ENCODE measurements at regions of chr1 and their contacts with region 1.

Region 1: DNA sequence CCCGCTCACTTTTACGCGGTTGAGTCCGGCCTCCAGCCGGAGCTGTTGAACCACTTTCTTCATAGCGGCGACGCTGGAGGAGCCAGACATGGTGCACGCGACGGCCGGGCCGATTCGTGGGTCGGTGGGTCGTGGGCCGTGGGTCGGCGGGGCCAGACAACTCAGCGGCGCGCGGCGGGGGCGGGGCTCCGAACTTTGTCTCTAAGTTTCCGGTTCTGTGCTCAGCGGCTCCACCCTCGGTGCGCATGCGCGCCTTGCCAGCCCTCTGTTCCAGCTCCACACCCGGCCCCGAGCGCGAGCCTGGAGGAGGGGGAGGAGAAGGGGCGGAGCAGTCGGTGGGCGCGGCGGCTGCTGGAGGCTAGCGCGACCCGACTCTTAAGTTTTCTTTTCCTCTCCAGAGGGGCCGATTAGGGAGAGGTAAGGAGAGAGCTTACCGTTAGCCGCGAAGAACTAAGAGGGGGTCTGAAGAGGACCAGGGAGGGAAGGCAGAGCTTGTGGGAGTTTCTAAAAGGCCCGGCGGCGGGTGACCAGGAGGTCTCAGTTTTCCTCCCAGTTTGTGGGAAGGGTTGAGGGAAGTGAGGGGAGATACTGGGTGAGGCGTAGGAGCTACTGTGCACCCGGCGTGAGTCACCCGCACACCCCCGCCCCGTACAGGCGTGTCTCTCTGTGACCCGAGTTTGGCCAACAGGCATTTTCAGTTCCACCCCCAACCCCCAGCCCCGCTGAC is at the starts of genes GNG5 and SPATA1:
- DNase-seq: peak; percentile 99
- ATAC-seq: peak; percentile 92
- H3K4me3 Mint-ChIP-seq: peak within 1 kb of the TSS; percentile 96
- H3K27ac Mint-ChIP-seq: peak within 1 kb of the TSS; percentile 98
- H3K4me1 Mint-ChIP-seq: peaks cover 37% of the 10 kb centered on the region
- H3K27me3 Mint-ChIP-seq: no peaks in the 10 kb centered on the region
- total RNA-seq, gene GNG5: 103 to 114 TPM
- total RNA-seq, gene SPATA1: 2.1 to 6.1 TPM

Region 2: DNA sequence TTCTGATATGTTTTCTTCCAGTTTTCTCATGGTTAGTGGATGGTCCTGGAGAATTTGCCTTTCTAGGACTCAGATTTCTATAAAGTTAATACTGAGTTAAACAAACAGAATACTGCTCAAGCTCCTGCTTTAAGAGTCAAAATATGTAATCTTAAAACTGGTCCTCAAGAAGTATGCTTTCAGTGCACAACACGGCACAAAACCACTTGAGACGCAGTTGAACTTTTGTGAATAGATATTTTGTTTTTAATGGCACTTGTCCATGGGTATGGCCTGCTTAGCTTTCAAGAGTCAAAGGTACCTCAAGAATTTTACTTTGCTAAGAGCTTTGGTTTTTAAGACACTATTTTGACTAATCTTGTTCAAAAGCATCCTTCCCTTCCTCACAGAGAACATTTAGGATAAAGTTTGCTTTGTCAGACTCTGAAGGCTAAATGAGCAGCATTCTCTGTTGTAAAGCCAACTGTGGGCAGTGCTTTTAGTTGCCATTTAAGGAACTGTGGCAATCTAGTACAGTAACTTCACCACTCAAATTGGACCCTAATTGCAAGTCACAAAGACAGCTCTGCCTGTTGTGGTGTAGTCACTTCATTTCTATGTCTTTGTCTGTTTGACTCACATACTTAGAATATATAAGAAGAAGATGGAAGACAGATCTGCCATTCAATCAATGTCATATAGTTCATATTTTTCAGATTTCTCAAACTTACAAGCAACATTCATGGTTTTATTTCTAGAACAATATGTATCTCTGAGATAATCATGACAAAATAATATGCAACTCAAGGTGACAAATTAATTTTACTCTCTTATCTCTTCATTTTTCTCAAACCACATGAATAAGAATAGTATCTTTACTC is 175.8 kb before region 1 on chr1:
- CTCF ChIA-PET with region 1: no interaction called
- DNase-seq: no peak
- ATAC-seq: no peak
- H3K4me3 Mint-ChIP-seq: no peak overlapping the region
- H3K27ac Mint-ChIP-seq: no peak overlapping the region
- H3K4me1 Mint-ChIP-seq: no peaks in the 10 kb centered on the region
- H3K27me3 Mint-ChIP-seq: no peaks in the 10 kb centered on the region

Region 3: GRCh38 chr1:84467298-84467697 is 38.9 kb before region 1 on chr1:
- CTCF ChIA-PET with region 1: no interaction called
- DNase-seq: no peak
- ATAC-seq: no peak
- H3K4me3 Mint-ChIP-seq: no peak overlapping the region
- H3K27ac Mint-ChIP-seq: no peak overlapping the region
- H3K4me1 Mint-ChIP-seq: no peaks in the 10 kb centered on the region
- H3K27me3 Mint-ChIP-seq: peaks cover 32% of the 10 kb centered on the region

Region 4: DNA sequence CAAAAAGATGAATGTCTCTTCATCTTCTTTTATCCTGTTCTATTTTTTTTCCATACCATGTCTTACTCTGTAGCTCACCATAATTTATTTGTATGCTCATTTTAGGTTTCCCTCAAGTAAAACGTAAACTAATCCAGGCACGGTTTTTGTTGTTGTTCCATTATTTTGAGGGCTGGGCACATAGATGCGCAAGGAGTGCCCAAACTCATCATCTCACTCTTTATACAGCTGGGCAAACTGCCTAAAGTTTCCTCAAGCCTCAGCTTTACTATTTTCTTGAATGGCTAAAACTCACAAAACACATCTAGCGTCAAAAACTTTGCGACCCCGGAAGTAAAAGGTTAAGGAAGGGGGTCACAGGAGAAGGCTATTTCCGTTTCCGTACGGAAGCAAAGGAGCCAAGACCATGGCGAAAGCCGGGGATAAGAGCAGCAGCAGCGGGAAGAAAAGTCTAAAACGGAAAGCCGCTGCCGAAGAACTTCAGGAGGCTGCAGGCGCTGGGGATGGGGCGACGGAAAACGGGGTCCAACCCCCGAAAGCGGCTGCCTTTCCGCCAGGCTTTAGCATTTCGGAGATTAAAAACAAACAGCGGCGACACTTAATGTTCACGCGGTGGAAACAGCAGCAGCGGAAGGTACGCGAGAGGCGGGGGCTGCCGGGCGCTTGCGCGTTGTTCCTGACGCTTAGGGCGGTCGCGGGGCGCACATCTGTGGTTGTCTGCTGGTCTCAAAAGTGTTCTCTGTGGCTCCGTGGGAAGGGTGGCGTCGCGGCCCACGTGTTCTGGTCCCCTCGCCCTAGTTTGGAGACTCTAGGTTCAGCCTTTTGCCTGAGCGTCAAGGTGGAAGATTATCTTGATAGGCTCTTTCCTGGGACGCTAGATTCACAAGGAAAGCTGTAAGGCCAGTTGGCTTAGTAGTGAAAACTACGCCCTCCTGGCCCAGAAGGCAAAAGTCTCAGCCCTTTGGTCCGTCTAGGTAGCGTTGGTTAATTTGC is 27.0 kb before region 1 on chr1 and contains the start of gene RPF1:
- CTCF ChIA-PET with region 1: interaction called, 12 read pairs
- DNase-seq: peak; percentile 85
- ATAC-seq: peak; percentile 96
- H3K4me3 Mint-ChIP-seq: peak within 1 kb of the TSS; percentile 92
- H3K27ac Mint-ChIP-seq: peak within 1 kb of the TSS; percentile 94
- H3K4me1 Mint-ChIP-seq: peaks cover 30% of the 10 kb centered on the region
- H3K27me3 Mint-ChIP-seq: peaks cover 21% of the 10 kb centered on the region
- total RNA-seq, gene RPF1: 29.7 to 43.2 TPM

Region 5: GRCh38 chr1:84573967-84574842 is 68.0 kb after region 1 on chr1 and contains the start of gene CTBS:
- CTCF ChIA-PET with region 1: interaction called, 15 read pairs
- DNase-seq: peak; percentile 90
- ATAC-seq: peak; percentile 88
- H3K4me3 Mint-ChIP-seq: peak within 1 kb of the TSS; percentile 94
- H3K27ac Mint-ChIP-seq: peak within 1 kb of the TSS; percentile 99
- H3K4me1 Mint-ChIP-seq: peaks cover 39% of the 10 kb centered on the region
- H3K27me3 Mint-ChIP-seq: no peaks in the 10 kb centered on the region
- total RNA-seq, gene CTBS: 13.6 to 18.7 TPM

Region 6: DNA sequence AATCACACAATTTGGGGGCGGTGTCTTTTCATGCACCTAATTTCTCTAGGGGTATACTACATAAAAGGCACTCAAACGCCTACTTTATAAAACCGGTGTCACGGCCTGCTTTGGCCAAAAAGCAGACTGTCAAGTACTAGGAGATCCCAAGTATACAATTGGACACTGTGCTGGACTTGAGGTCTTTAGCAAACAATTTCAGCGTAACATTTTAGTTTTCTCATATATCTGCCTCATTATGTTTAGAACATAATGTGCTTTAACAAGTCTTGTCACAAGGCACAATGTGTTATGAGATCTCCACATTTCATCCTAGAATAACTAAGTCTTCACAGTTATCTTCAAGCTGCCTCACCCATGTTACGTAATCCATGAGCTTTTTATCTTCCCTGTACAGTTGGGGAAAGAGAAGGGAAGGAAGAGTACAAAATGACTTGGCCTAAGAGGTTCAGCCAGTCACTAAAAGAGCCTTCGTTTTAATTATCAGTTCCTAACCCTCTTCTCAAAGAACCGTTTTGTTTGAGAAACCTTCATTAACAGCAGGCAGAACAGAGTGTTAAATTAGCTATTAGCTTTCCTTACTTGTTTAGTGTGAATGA is 182.4 kb after region 1 on chr1:
- CTCF ChIA-PET with region 1: no interaction called
- DNase-seq: no peak
- ATAC-seq: no peak
- H3K4me3 Mint-ChIP-seq: peak overlapping the region; percentile 46
- H3K27ac Mint-ChIP-seq: no peak overlapping the region
- H3K4me1 Mint-ChIP-seq: peaks cover 46% of the 10 kb centered on the region
- H3K27me3 Mint-ChIP-seq: no peaks in the 10 kb centered on the region